ENCODE measurements at regions of chr2 and their contacts with region 1.

Region 1: GRCh38 chr2:200471324-200471848 is 38.5 kb downstream of the KCTD18 start:
- DNase-seq: peak; percentile 93
- ATAC-seq: peak; percentile 88
- H3K4me3 ChIP-seq: no peak overlapping the region
- H3K27ac ChIP-seq: peak overlapping the region; percentile 61
- H3K4me1 ChIP-seq: peaks cover 30% of the 10 kb centered on the region
- H3K27me3 ChIP-seq: no peaks in the 10 kb centered on the region
- CTCF ChIP-seq: peak; percentile 61 to 76 (median 74); a peak in 5 of 6 replicates
- EP300 ChIP-seq: peak; percentile 89 to 90
- POLR2A ChIP-seq: no peak
- RAD21 ChIP-seq: peak; percentile 89

Region 2: GRCh38 chr2:199940373-199940772 is 531.0 kb before region 1 on chr2:
- CTCF ChIA-PET with region 1: no interaction called
- POLR2A ChIA-PET with region 1: no interaction called
- RAD21 ChIA-PET with region 1: no interaction called
- SMC1A ChIA-PET with region 1: no interaction called
- in situ Hi-C with region 1: no loop called
- intact Hi-C with region 1: no loop called
- DNase-seq: no peak
- ATAC-seq: peak; percentile 83
- H3K4me3 ChIP-seq: no peak overlapping the region
- H3K27ac ChIP-seq: no peak overlapping the region
- H3K4me1 ChIP-seq: no peaks in the 10 kb centered on the region
- H3K27me3 ChIP-seq: no peaks in the 10 kb centered on the region
- CTCF ChIP-seq: peak; percentile 4 to 41 (median 24); a peak in 1 of 6 replicates
- EP300 ChIP-seq: no peak
- POLR2A ChIP-seq: no peak
- RAD21 ChIP-seq: peak; percentile 56

Region 3: GRCh38 chr2:199985625-199986207 is 485.7 kb before region 1 on chr2:
- CTCF ChIA-PET with region 1: interaction called, 50 read pairs
- POLR2A ChIA-PET with region 1: interaction called, 3 read pairs
- RAD21 ChIA-PET with region 1: interaction called, 8 read pairs
- SMC1A ChIA-PET with region 1: interaction called, 41 read pairs
- in situ Hi-C with region 1: no loop called
- intact Hi-C with region 1: loop called (anchors 1 kb)
- DNase-seq: no peak
- ATAC-seq: peak; percentile 91
- H3K4me3 ChIP-seq: no peak overlapping the region
- H3K27ac ChIP-seq: no peak overlapping the region
- H3K4me1 ChIP-seq: no peaks in the 10 kb centered on the region
- H3K27me3 ChIP-seq: no peaks in the 10 kb centered on the region
- CTCF ChIP-seq: peak; percentile 34 to 64 (median 58)
- EP300 ChIP-seq: no peak
- POLR2A ChIP-seq: no peak
- RAD21 ChIP-seq: peak; percentile 45

Region 4: GRCh38 chr2:200306196-200306930 is 165.0 kb before region 1 on chr2 and contains the start of gene SPATS2L:
- CTCF ChIA-PET with region 1: interaction called, 6 read pairs
- POLR2A ChIA-PET with region 1: no interaction called
- RAD21 ChIA-PET with region 1: interaction called, 7 read pairs
- SMC1A ChIA-PET with region 1: interaction called, 9 read pairs
- in situ Hi-C with region 1: no loop called
- intact Hi-C with region 1: loop called (anchors 2 kb)
- DNase-seq: no peak
- ATAC-seq: peak; percentile 73
- H3K4me3 ChIP-seq: peak within 1 kb of the TSS; percentile 73
- H3K27ac ChIP-seq: peak within 1 kb of the TSS; percentile 70
- H3K4me1 ChIP-seq: peaks cover 4% of the 10 kb centered on the region; the same call in 1 of the 2 replicates
- H3K27me3 ChIP-seq: no peaks in the 10 kb centered on the region
- CTCF ChIP-seq: no peak
- EP300 ChIP-seq: no peak
- POLR2A ChIP-seq: peak; percentile 39
- RAD21 ChIP-seq: no peak
- polyA plus RNA-seq, gene SPATS2L: 5.2 to 8.0 TPM

Region 5: DNA sequence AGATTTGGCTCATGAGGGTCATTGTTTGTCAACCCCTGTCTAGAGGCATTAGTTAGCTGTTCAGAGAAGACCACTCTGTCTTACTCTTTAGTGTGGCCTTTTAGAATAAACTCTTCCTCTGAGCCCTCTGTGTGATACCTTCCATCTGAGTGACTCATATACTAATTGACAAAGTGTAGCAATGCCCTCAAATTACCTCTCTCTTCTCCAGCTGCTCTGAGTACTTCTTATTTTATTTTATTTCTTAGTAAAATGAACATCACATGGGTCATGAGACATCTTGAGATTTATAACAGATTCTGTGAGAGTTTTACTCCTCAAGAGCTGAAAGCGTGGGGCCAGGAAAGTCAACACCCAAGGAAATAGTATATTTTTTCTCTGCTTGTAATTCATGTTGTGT is 28.9 kb before region 1 on chr2:
- CTCF ChIA-PET with region 1: interaction called, 30 read pairs
- POLR2A ChIA-PET with region 1: no interaction called
- RAD21 ChIA-PET with region 1: interaction called, 7 read pairs
- SMC1A ChIA-PET with region 1: interaction called, 11 read pairs
- in situ Hi-C with region 1: no loop called
- intact Hi-C with region 1: no loop called
- DNase-seq: no peak
- ATAC-seq: no peak
- H3K4me3 ChIP-seq: no peak overlapping the region
- H3K27ac ChIP-seq: no peak overlapping the region
- H3K4me1 ChIP-seq: no peaks in the 10 kb centered on the region
- H3K27me3 ChIP-seq: no peaks in the 10 kb centered on the region
- CTCF ChIP-seq: no peak
- EP300 ChIP-seq: no peak
- POLR2A ChIP-seq: no peak
- RAD21 ChIP-seq: no peak

Region 6: DNA sequence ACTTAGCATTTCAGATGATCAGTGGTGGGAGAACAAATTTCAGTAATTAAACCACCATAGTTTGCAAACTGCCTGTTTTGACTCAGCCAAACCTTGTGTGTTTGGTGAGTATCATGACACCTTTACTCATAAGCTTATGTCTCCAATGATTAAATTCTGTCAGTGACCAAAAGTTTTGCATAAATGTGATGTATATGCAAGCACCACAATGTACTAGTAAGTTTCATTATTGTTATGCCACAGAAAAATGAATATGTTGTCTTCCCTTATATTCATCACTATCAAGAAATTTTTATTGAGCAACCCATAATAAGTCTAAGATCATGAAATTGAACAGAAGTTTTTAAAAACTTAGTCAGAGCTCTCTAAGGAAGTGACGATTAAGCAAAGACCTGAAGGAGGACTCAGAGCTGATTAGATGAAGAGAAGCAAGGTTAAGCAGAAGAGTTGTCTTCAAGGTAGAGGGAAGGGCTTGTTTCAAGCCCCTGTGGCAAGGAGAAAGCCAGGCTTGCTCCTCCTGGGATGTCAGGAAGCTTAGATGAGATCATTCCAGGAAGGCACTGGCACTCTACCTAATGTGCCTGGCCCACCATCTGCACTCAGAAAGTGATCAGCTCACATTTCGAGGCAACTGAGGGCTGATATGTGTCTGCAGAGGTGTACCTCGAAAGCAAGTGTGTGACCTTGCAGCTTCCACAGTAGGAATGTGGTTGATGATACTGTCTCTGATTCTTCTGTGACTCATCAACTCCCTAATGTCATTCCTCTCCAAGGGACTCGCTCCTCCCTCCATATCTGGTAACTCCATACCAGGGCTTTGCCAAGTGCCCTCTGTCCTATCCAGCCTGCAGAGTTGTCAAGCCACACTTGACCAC is 16.2 kb before region 1 on chr2:
- CTCF ChIA-PET with region 1: interaction called, 32 read pairs
- POLR2A ChIA-PET with region 1: interaction called, 7 read pairs
- RAD21 ChIA-PET with region 1: interaction called, 33 read pairs
- SMC1A ChIA-PET with region 1: interaction called, 41 read pairs
- in situ Hi-C with region 1: no loop called
- intact Hi-C with region 1: loop called (anchors 2 kb)
- DNase-seq: peak; percentile 66
- ATAC-seq: peak; percentile 77
- H3K4me3 ChIP-seq: no peak overlapping the region
- H3K27ac ChIP-seq: peak overlapping the region; percentile 30; the same call in 1 of the 2 replicates
- H3K4me1 ChIP-seq: peaks cover 17% of the 10 kb centered on the region
- H3K27me3 ChIP-seq: no peaks in the 10 kb centered on the region
- CTCF ChIP-seq: no peak
- EP300 ChIP-seq: peak; percentile 82 to 86; a peak in 3 of 4 replicates
- POLR2A ChIP-seq: no peak
- RAD21 ChIP-seq: no peak